Sciatic nerve (tissue), 2 donors: ENCODE measurements at regions of chr14 and their contacts with region 1.

Region 1: DNA sequence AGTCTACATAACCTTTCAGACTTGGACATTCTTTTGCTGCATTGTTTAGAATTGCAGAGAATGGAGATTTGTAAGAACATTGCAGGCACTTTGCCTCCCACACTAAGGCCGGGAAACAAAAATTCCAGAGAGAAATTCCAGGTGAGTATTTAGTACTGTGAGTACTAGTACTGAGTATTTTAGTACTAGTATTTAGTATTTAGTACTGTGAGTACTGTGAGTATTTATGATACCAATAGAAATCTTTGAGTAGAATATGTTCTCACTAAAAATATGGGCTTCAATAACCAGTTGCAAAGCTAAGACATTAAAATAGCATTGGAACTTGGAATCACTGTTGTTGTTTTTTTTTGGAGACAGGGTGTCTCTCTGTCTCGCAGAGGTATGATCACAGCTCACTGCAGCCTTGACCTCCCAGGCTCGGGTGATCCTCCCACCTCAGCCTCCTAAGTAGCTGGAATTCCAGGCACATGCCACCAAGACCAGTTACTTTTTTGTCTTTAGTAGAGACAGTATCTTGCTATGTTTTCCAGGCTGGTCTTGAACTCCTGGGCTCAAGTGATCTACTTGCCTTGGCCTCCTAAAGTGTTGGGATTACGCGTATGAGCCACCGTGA is 5.3 kb upstream of the HAUS4 start:
- DNase-seq: no peak
- ATAC-seq: no peak

Region 2: DNA sequence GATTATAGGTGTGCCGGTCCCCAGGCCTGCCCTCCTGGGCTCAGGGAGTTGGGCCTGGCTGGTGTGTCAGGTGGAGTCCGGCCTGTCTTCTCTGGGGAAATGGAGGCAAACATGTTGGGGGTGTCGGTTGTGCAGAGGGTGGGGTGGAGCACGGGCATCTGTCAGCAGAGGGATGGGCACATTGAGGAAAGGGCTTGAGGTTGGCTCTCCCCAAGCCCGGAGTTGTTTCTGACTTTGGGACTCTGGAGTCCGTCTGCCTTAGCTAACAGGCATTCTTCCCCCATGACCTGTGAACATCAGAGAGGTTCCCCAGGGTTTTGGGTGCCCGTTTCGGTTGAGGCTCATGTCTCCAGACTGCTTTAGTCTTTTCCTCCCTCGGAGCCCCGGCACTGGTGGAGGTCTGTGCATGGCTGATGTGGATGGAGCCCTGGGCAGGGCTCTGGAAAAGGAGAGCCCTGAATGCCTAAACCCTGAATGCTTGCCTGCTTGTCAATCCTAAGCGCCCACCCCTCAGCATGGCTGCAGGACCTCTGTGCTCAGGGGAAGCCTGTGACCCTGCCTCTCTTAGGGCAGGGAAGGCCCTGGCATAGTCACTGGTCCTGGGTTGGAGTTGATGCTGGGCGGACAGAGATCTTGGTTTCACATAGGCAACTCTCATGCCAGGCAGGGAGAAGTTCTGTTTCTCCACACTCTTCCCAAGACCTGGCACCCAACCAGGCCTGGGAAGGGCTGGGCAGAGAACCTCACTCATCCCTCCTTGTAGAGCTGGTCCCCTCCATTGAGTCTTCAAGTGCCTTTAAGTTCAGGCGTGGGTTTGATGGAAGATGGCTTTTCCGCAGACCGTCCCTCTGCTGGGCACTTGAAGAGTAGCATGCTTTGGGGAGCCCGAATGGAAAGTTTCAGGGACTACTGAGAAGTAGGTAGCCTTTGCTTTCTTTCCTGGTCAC is 1449.5 kb after region 1 on chr14:
- intact Hi-C with region 1: loop called (anchors 5 kb)
- DNase-seq: no peak
- ATAC-seq: peak; percentile 31